ENCODE measurements at regions of chr2 and their contacts with region 1.

Region 1: GRCh38 chr2:181891966-181892798 is 652 bp downstream of the ITPRID2 start:
- DNase-seq: peak; percentile 61
- H3K4me3 Mint-ChIP-seq: peak overlapping the region; percentile 94
- H3K27ac Mint-ChIP-seq: peak overlapping the region; percentile 81
- H3K4me1 Mint-ChIP-seq: peaks cover 28% of the 10 kb centered on the region
- H3K27me3 Mint-ChIP-seq: peaks cover 12% of the 10 kb centered on the region

Region 2: GRCh38 chr2:181077128-181077709 is 815.0 kb before region 1 on chr2:
- CTCF ChIA-PET with region 1: no interaction called
- intact Hi-C with region 1: loop called (anchors 10 kb)
- DNase-seq: peak; percentile 8
- H3K4me3 Mint-ChIP-seq: no peak overlapping the region
- H3K27ac Mint-ChIP-seq: no peak overlapping the region
- H3K4me1 Mint-ChIP-seq: peaks cover 6% of the 10 kb centered on the region
- H3K27me3 Mint-ChIP-seq: no peaks in the 10 kb centered on the region

Region 3: DNA sequence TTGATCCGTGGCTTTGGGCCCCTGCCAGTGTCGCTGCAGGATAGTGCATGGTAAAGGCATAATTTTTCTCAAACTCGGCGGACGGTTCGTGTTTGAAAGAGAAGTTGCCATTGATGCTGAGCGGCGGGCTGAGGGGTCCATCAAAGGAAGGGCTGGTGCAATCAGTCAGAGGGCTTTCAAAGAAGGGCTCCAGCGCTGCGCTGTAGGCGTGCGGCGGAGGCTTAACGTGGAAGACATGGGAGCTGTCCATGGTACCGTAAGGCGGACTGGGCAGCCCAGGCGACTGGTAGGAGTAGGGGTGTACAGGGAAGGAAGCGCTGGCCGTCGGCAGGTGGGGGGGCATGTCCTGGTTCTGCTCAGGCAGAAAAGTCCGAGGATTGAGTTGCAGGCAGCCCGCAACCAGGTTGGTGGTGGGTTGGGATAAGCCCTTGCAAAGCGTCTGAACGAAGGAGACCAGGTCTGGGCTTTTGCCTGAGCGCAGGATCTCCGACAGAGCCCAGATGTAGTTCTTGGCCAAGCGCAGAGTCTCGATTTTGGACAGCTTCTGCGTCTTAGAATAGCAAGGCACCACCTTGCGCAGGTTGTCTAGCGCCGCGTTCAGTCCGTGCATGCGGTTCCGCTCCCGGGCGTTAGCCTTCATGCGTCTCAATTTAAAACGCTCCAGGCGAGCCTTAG is 214.1 kb before region 1 on chr2:
- CTCF ChIA-PET with region 1: no interaction called
- intact Hi-C with region 1: loop called (anchors 2 kb)
- DNase-seq: peak; percentile 84
- H3K4me3 Mint-ChIP-seq: peak overlapping the region; percentile 9
- H3K27ac Mint-ChIP-seq: no peak overlapping the region
- H3K4me1 Mint-ChIP-seq: peaks cover 43% of the 10 kb centered on the region
- H3K27me3 Mint-ChIP-seq: peaks cover 70% of the 10 kb centered on the region

Region 4: DNA sequence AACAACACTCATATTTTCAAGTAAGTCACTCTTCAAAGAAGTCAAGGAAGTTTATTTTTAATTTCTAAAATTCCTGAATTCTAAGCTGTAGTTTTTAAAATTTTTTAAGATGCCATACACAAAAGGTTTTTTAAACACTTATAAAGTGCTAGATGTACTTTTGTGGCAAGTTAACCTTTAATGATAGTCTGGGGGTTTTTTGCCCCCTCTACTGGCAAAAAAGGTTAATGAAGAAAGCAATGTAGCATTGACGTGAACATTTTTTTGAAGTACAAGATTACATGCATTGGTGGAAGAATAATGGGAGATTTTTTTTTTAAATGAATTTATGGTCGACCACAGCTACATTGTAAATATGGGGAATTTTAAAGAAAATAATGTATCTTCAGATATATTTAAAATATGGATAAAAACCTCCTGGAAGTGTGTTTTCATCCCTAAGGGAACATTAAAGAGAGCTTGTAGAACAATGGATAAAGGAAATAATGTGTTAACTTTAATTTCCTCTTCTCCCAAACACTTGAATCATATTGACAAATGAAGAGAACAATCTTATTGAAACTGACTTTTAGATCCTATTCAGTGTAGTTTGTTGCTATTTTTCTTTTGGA is 11.9 kb after region 1 on chr2:
- CTCF ChIA-PET with region 1: interaction called, 18 read pairs
- intact Hi-C with region 1: loop called (anchors 1 kb)
- DNase-seq: no peak
- H3K4me3 Mint-ChIP-seq: no peak overlapping the region
- H3K27ac Mint-ChIP-seq: no peak overlapping the region
- H3K4me1 Mint-ChIP-seq: peaks cover 23% of the 10 kb centered on the region
- H3K27me3 Mint-ChIP-seq: no peaks in the 10 kb centered on the region

Region 5: DNA sequence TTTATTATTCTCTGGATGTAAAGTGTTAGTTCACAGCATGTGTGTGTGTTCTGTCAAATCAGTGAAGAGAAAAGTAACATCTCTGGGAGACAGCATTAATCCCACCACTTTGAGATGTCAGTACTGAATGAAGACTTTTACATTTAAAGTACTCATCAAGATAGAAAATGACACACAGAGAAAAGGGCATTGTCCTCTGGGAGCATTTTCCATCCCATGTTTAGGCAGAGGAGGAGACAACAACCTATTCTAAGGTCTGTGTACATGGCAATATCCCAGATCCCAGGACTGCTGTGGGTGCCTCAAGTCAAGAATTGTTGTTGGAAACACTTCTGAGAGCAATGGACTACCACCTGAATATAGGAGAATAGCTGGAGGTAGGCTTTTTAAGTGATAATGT is 294.9 kb after region 1 on chr2:
- CTCF ChIA-PET with region 1: no interaction called
- intact Hi-C with region 1: no loop called
- DNase-seq: no peak
- H3K4me3 Mint-ChIP-seq: no peak overlapping the region
- H3K27ac Mint-ChIP-seq: no peak overlapping the region
- H3K4me1 Mint-ChIP-seq: no peaks in the 10 kb centered on the region
- H3K27me3 Mint-ChIP-seq: peaks cover 8% of the 10 kb centered on the region

Region 6: DNA sequence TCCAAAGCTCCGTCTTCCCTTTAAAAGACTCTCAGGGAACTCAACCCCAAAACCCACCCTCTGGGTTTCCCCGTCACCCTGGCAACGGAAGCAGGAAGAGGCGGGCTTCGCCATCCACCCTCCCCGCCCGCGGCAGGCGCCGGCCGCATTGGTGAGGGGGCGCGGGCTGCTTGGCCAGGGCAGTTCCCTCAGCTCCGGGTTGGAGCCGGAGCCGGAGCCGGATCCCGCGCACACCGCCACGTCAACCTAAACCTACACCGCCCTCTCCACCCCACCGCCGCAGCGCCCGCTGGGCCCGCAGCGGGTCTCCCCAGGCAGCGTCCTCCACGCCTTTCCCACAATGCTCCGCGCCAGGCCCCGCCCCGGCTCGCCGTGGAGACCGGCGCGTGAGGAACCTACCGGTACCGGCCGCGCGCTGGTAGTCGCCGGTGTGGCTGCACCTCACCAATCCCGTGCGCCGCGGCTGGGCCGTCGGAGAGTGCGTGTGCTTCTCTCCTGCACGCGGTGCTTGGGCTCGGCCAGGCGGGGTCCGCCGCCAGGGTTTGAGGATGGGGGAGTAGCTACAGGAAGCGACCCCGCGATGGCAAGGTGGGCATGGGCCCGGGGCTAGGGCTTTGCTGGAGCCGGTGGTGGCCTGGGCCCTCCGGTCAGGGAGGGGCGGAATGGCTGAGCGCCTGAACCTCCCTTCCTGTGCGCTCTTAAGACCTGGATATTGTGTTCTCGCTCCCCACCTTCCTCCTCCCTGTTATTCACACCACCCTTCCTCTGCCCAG is 823.9 kb after region 1 on chr2 and contains the start of gene DNAJC10:
- CTCF ChIA-PET with region 1: no interaction called
- intact Hi-C with region 1: loop called (anchors 2 kb)
- DNase-seq: peak; percentile 89
- H3K4me3 Mint-ChIP-seq: no peak within 1 kb of the TSS
- H3K27ac Mint-ChIP-seq: no peak within 1 kb of the TSS
- H3K4me1 Mint-ChIP-seq: peaks cover 10% of the 10 kb centered on the region
- H3K27me3 Mint-ChIP-seq: no peaks in the 10 kb centered on the region
- total RNA-seq, gene DNAJC10: 40.8 to 41.5 TPM

Measured in activated naive CD4-positive, alpha-beta T cell treated with anti-CD3 and anti-CD28 coated beads for 36 hours (primary cell).